ENCODE measurements at regions of chr2 and their contacts with region 1.

Region 1: GRCh38 chr2:143259368-143259958 is 130.2 kb downstream of the ARHGAP15 start:
- DNase-seq: peak; percentile 76
- H3K4me3 Mint-ChIP-seq: peak overlapping the region; percentile 4
- H3K27ac Mint-ChIP-seq: no peak overlapping the region
- H3K4me1 Mint-ChIP-seq: peaks cover 14% of the 10 kb centered on the region
- H3K27me3 Mint-ChIP-seq: no peaks in the 10 kb centered on the region
- CTCF ChIP-seq: peak; percentile 64

Region 2: GRCh38 chr2:143078104-143078503 is 181.4 kb before region 1 on chr2:
- CTCF ChIA-PET with region 1: interaction called, 10 read pairs
- POLR2A ChIA-PET with region 1: no interaction called
- intact Hi-C with region 1: loop called (anchors 1 kb)
- DNase-seq: no peak
- H3K4me3 Mint-ChIP-seq: no peak overlapping the region
- H3K27ac Mint-ChIP-seq: no peak overlapping the region
- H3K4me1 Mint-ChIP-seq: peaks cover 6% of the 10 kb centered on the region
- H3K27me3 Mint-ChIP-seq: no peaks in the 10 kb centered on the region
- CTCF ChIP-seq: peak; percentile 18

Region 3: DNA sequence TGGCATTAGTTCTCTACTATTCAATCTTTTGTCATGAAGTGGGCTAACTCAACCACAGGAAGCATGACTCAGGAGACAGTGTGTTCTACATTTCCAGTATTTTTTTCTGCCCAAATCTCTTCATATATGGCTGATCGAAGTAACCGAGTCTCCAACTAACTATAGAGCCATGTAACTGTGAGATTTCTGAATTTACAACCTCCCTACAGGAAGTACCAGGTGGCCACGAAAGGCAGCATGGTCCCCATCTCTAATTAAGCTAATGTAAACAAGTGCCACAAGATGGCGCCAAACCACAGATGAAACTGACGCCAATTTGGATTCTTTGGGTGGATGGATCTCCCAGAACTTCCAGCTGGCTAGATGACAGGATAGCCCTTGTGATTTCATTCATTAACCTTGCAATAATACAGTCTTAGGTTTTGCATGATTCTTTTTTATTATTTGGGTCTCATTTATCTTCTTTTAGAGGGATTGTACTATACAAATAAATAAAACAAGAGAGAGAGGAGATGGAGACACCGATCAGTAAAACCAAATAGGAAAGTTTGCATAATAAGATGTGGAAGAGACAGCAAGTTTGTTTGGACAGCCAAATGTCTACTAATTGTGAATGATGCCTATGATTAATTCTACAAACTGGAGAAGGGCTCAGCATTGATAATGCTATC is 148.6 kb before region 1 on chr2:
- CTCF ChIA-PET with region 1: interaction called, 26 read pairs
- POLR2A ChIA-PET with region 1: no interaction called
- intact Hi-C with region 1: loop called (anchors 1 kb)
- DNase-seq: peak; percentile 86
- H3K4me3 Mint-ChIP-seq: no peak overlapping the region
- H3K27ac Mint-ChIP-seq: no peak overlapping the region
- H3K4me1 Mint-ChIP-seq: peaks cover 8% of the 10 kb centered on the region
- H3K27me3 Mint-ChIP-seq: no peaks in the 10 kb centered on the region
- CTCF ChIP-seq: peak; percentile 77

Region 4: GRCh38 chr2:143171532-143172216 is 87.8 kb before region 1 on chr2:
- CTCF ChIA-PET with region 1: interaction called, 17 read pairs
- POLR2A ChIA-PET with region 1: no interaction called
- intact Hi-C with region 1: no loop called
- DNase-seq: peak; percentile 12
- H3K4me3 Mint-ChIP-seq: no peak overlapping the region
- H3K27ac Mint-ChIP-seq: no peak overlapping the region
- H3K4me1 Mint-ChIP-seq: peaks cover 15% of the 10 kb centered on the region
- H3K27me3 Mint-ChIP-seq: no peaks in the 10 kb centered on the region
- CTCF ChIP-seq: no peak

Region 5: DNA sequence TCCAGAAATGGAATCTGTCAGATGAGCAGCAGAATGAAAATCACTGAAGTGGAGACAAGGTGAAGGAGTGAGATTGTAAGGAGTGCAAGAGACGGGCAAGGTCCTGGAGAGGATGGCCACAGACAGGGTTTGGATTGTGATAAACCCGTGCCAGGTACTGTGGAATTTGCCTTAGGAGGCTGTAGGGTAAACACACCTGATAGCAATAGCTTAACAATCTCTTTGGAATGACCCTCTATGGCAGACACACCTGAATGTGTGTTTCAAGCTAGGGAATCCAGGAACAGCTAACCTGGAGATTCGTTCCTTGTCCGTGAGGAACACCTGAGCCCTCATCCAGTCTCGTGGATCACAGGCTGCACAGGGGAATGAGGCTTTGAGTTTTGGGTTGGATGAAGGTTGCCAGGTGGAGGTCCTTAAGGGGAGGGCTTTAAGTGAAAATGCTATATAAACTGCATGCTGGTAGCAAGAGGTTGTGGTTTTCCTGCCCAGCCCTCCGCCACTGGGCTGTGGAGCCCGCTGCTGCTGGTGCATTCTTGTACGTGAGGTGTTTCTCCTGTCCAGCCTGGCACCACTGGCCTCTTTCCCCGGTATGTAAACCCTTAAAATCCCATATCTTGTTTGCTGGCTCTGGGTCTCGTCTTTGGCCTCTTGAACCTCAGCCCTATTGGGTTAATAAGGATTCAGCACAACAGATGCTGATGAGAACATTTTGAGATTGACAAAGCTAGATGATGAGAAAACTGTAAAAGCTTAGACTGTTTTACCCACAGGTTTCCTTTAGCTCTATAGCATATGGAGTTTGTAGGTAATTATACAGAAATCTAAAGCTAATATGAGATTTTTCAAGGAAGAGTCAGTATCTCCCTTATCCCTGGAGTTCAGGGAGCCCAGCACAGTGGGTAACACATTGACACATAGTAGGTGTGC is 12.4 kb before region 1 on chr2:
- CTCF ChIA-PET with region 1: interaction called, 19 read pairs
- POLR2A ChIA-PET with region 1: interaction called, 3 read pairs
- intact Hi-C with region 1: no loop called
- DNase-seq: no peak
- H3K4me3 Mint-ChIP-seq: no peak overlapping the region
- H3K27ac Mint-ChIP-seq: no peak overlapping the region
- H3K4me1 Mint-ChIP-seq: no peaks in the 10 kb centered on the region
- H3K27me3 Mint-ChIP-seq: no peaks in the 10 kb centered on the region
- CTCF ChIP-seq: no peak